ENCODE measurements at regions of chr9 and their contacts with region 1.

Region 1: DNA sequence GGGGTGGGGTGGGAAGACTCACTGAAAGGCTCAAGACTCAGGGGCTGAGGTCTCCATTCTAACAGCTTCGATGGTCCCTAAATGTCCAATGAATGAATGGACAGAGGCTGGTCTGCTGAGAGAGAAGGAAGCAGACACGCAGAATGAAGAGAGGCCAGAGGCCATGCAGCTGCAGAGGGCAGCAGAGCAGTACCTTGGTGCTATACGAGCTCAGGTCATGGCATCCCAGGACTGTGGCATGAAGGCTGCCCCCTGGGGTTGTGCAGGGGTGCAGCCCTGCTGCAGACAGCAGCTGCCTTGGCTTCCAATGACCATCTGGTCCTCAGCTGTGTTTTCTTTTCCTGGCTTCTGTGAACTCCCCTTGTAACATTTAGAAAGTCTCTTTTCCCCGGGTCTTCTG is 15.2 kb upstream of the CORO2A start:
- DNase-seq: no peak
- H3K4me3 ChIP-seq: no peak overlapping the region
- H3K4me3 Mint-ChIP-seq: no peak overlapping the region
- H3K27ac Mint-ChIP-seq: no peak overlapping the region
- H3K4me1 ChIP-seq: no peaks in the 10 kb centered on the region
- H3K4me1 Mint-ChIP-seq: no peaks in the 10 kb centered on the region
- H3K27me3 ChIP-seq: no peaks in the 10 kb centered on the region
- H3K27me3 Mint-ChIP-seq: no peaks in the 10 kb centered on the region
- CTCF ChIP-seq: no peak

Region 2: DNA sequence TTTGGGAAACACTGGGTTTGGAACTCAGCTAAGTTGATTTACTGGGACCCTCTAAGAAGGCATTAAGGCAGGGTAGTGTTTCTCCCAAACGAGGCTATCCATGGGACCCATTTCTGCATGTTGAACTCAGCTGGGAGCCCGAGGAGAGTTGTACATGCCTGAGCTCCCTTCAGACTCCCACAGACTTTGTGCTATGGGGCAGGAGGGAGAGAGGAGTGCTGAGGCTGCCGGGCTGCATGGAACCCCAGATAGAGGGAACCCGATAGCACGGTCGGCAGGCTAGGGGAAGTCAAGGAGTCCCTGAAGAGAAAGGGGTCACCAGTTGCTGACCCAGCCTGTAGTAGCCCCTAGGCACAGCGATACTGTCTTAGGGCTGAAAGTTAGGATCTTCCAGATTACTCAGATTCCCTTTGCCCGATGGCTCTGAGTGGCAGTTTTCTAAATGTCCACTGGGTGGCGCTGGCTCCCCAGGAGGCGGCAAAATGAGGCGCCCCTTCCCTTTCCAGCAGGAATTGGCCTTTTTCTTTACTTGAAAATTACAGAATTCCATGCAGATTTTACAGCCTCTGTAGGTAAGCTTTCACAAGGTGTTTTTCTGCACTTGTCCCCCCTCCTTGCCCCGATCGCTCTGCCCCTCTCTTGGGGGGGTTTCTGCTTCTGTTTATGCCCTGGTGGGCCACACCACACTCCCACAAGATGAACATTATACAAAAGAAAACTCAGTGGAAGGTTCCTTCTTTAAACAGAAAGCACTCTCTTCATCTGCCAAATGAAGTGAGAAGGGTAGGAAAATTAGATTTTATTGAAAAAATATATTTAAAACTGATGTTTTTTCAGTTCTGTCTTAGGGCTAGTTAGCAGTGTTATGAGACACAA is 133.3 kb before region 1 on chr9:
- CTCF ChIA-PET with region 1: no interaction called
- POLR2A ChIA-PET with region 1: no interaction called
- intact Hi-C with region 1: loop called (anchors 1 kb)
- DNase-seq: peak; percentile 71 to 80
- H3K4me3 ChIP-seq: no peak overlapping the region
- H3K4me3 Mint-ChIP-seq: no peak overlapping the region
- H3K27ac Mint-ChIP-seq: peak overlapping the region; percentile 27
- H3K4me1 ChIP-seq: peaks cover 16% of the 10 kb centered on the region
- H3K4me1 Mint-ChIP-seq: peaks cover 12% of the 10 kb centered on the region
- H3K27me3 ChIP-seq: no peaks in the 10 kb centered on the region
- H3K27me3 Mint-ChIP-seq: no peaks in the 10 kb centered on the region
- CTCF ChIP-seq: peak; percentile 90 to 96

Region 3: GRCh38 chr9:98222885-98223640 is 15.5 kb after region 1 on chr9:
- CTCF ChIA-PET with region 1: interaction called, 11 read pairs
- POLR2A ChIA-PET with region 1: no interaction called
- intact Hi-C with region 1: no loop called
- DNase-seq: peak in 1 of 2 experiments; percentile 61
- H3K4me3 ChIP-seq: no peak overlapping the region
- H3K4me3 Mint-ChIP-seq: no peak overlapping the region
- H3K27ac Mint-ChIP-seq: peak overlapping the region; percentile 33
- H3K4me1 ChIP-seq: peaks cover 50% of the 10 kb centered on the region
- H3K4me1 Mint-ChIP-seq: peaks cover 21% of the 10 kb centered on the region
- H3K27me3 ChIP-seq: no peaks in the 10 kb centered on the region
- H3K27me3 Mint-ChIP-seq: no peaks in the 10 kb centered on the region
- CTCF ChIP-seq: no peak

Region 4: DNA sequence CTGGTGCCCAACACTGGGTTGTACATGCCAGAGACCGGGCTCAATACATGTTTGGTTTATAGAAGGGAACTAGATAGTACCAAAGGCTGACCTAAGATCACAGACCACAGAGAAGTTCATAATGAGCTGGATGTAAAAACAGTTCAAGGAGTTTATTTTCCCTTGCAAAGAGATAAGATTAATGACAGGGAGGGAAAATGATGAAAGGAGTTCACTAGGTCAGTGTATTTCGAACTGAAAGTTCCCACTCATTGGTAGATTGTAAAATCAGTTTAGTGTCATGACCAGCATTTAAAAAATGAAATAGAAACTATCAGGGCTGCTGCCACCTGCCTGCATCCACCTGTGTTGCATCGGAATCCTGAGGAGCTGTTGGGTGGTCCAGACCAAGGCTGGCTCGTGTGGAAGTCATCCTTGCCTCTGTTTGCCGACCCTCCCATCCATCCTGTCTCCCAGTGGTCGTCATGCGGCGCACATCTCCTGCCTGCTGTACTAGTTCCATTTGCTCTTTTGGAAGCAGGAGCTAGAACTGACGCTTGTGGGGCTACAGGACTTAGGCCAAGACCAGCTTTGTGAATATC is 26.7 kb after region 1 on chr9:
- CTCF ChIA-PET with region 1: interaction called, 10 read pairs
- POLR2A ChIA-PET with region 1: no interaction called
- intact Hi-C with region 1: loop called (anchors 2 kb)
- DNase-seq: no peak
- H3K4me3 ChIP-seq: no peak overlapping the region
- H3K4me3 Mint-ChIP-seq: no peak overlapping the region
- H3K27ac Mint-ChIP-seq: no peak overlapping the region
- H3K4me1 ChIP-seq: peaks cover 56% of the 10 kb centered on the region
- H3K4me1 Mint-ChIP-seq: peaks cover 26% of the 10 kb centered on the region
- H3K27me3 ChIP-seq: no peaks in the 10 kb centered on the region
- H3K27me3 Mint-ChIP-seq: no peaks in the 10 kb centered on the region
- CTCF ChIP-seq: peak; percentile 21 to 44

Region 5: GRCh38 chr9:98255578-98256296 is 48.1 kb after region 1 on chr9 and contains the start of gene TBC1D2:
- CTCF ChIA-PET with region 1: interaction called, 10 read pairs
- POLR2A ChIA-PET with region 1: no interaction called
- intact Hi-C with region 1: no loop called
- DNase-seq: peak; percentile 96 to 99
- H3K4me3 ChIP-seq: peak within 1 kb of the TSS; percentile 64
- H3K4me3 Mint-ChIP-seq: peak within 1 kb of the TSS; percentile 98
- H3K27ac Mint-ChIP-seq: peak within 1 kb of the TSS; percentile 90
- H3K4me1 ChIP-seq: peaks cover 10% of the 10 kb centered on the region
- H3K4me1 Mint-ChIP-seq: peaks cover 15% of the 10 kb centered on the region
- H3K27me3 ChIP-seq: no peaks in the 10 kb centered on the region
- H3K27me3 Mint-ChIP-seq: no peaks in the 10 kb centered on the region
- CTCF ChIP-seq: peak in 1 of 2 experiments; percentile 8
- total RNA-seq, gene TBC1D2: 8.5 and 8.6 TPM in 2 replicates

Region 6: GRCh38 chr9:98263482-98264357 is 56.1 kb after region 1 on chr9:
- CTCF ChIA-PET with region 1: interaction called, 6 read pairs
- POLR2A ChIA-PET with region 1: no interaction called
- intact Hi-C with region 1: loop called (anchors 1 kb)
- DNase-seq: peak; percentile 85
- H3K4me3 ChIP-seq: no peak overlapping the region
- H3K4me3 Mint-ChIP-seq: no peak overlapping the region
- H3K27ac Mint-ChIP-seq: no peak overlapping the region
- H3K4me1 ChIP-seq: no peaks in the 10 kb centered on the region
- H3K4me1 Mint-ChIP-seq: peaks cover 17% of the 10 kb centered on the region
- H3K27me3 ChIP-seq: no peaks in the 10 kb centered on the region
- H3K27me3 Mint-ChIP-seq: no peaks in the 10 kb centered on the region
- CTCF ChIP-seq: peak; percentile 94 to 96

Region 7: DNA sequence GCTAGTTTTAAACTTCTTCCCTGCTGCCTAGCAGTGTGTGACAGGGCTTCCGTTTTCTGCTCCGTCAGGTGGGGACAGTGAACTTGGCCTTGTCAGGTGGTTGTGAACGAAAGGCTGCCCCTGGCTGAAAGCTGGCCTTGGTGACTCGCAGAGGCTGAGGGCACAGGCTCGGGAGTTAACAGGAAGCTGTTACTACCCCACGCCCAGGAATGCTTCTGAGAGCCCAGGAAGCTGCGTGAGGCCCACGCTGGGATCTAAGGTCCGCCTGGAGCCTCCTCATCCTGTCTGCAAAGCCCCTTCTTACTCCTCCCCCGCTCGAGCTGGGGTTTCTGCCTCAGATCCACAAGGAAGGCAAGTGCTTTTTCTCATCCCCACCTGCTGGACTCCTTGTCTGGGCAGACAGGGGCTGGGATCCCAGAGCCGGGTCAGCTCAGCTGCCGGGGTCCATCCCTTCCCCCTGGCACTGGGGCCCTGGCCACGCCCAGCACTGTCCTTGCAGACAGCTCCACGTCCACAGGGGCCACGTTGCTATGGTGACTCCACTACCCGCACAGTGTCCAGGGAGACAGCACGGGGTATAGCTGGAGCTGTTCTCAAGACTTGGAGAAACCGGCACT is 172.6 kb after region 1 on chr9:
- CTCF ChIA-PET with region 1: no interaction called
- POLR2A ChIA-PET with region 1: no interaction called
- intact Hi-C with region 1: no loop called
- DNase-seq: peak; percentile 14 to 65
- H3K4me3 ChIP-seq: no peak overlapping the region
- H3K4me3 Mint-ChIP-seq: no peak overlapping the region
- H3K27ac Mint-ChIP-seq: no peak overlapping the region
- H3K4me1 ChIP-seq: peaks cover 21% of the 10 kb centered on the region
- H3K4me1 Mint-ChIP-seq: peaks cover 3% of the 10 kb centered on the region
- H3K27me3 ChIP-seq: no peaks in the 10 kb centered on the region
- H3K27me3 Mint-ChIP-seq: no peaks in the 10 kb centered on the region
- CTCF ChIP-seq: no peak